Ovary (tissue), 10 donors: ENCODE measurements at regions of chr2 and their contacts with region 1.

Region 1: GRCh38 chr2:219744600-219744999 is 117.2 kb downstream of the SLC4A3 start:
- DNase-seq: no peak
- H3K4me3 ChIP-seq: no peak overlapping the region
- H3K27ac ChIP-seq: no peak overlapping the region
- H3K4me1 ChIP-seq: peaks cover 7% of the 10 kb centered on the region
- H3K27me3 ChIP-seq: no peaks in the 10 kb centered on the region
- CTCF ChIP-seq: no peak
- EP300 ChIP-seq: no peak
- POLR2A ChIP-seq: no peak

Region 2: DNA sequence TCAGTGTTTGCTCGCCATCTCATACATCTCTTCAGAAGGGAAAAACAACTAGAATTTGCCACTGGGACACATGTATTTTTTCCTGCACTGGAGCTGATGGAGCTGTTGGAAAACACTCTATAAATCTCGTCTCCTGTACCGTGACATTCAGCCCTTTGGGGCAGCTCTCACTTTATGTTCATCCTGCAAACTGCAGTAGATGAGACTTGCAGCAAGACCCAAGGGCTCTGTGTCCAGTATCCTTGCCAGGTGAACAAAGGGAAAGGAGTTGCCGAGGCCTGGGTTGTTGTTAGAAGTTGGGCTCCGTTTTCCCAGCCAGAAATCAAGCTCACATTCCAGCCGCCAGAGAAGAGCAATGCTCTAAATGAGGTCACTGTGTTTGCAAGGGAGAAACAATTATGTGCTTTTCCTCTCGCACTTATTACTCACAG is 167.9 kb after region 1 on chr2:
- intact Hi-C with region 1: loop called in 1 of 4 experiments (anchors 10 kb)
- DNase-seq: peak; percentile 40 to 59 (median 49)
- H3K4me3 ChIP-seq: no peak overlapping the region
- H3K27ac ChIP-seq: no peak overlapping the region
- H3K4me1 ChIP-seq: peaks cover 3% of the 10 kb centered on the region
- H3K27me3 ChIP-seq: no peaks in the 10 kb centered on the region
- CTCF ChIP-seq: peak in 2 of 3 donors; percentile 38 to 72
- EP300 ChIP-seq: no peak
- POLR2A ChIP-seq: no peak

Region 3: DNA sequence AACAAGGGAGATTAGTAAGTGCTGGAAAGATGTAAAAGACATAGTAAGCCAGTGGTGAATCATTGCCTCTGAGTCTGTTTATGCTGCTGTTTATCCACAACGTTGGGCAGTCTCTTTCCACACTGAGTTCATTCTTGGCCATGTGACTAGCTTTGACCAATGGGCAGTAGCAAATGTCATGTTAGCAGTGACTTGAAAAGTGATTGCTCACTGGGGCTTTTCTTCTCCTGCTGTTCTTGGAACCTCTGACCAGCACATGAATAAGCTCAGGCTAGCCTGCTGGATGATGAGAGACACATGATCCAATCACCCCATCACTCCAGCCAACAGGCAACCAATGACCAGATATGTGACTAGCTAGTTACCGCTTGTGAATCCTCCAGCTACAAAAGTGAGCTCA is 243.2 kb after region 1 on chr2:
- intact Hi-C with region 1: loop called in 1 of 4 experiments (anchors 10 kb)
- DNase-seq: no peak
- H3K4me3 ChIP-seq: no peak overlapping the region
- H3K27ac ChIP-seq: no peak overlapping the region
- H3K4me1 ChIP-seq: peaks cover 4% of the 10 kb centered on the region
- H3K27me3 ChIP-seq: no peaks in the 10 kb centered on the region
- CTCF ChIP-seq: no peak
- EP300 ChIP-seq: no peak
- POLR2A ChIP-seq: no peak

Region 4: GRCh38 chr2:220687231-220687843 is 942.7 kb after region 1 on chr2:
- intact Hi-C with region 1: loop called in 1 of 4 experiments (anchors 10 kb)
- DNase-seq: peak; percentile 65 to 75 (median 73)
- H3K4me3 ChIP-seq: no peak overlapping the region
- H3K27ac ChIP-seq: no peak overlapping the region
- H3K4me1 ChIP-seq: no peaks in the 10 kb centered on the region
- H3K27me3 ChIP-seq: no peaks in the 10 kb centered on the region
- CTCF ChIP-seq: peak; percentile 48 to 78 (median 52)
- EP300 ChIP-seq: no peak
- POLR2A ChIP-seq: no peak